ENCODE measurements at regions of chr2 and their contacts with region 1.

Region 1: GRCh38 chr2:70226781-70227180 is 21.6 kb downstream of the TIA1 start:
- DNase-seq: no peak

Region 2: DNA sequence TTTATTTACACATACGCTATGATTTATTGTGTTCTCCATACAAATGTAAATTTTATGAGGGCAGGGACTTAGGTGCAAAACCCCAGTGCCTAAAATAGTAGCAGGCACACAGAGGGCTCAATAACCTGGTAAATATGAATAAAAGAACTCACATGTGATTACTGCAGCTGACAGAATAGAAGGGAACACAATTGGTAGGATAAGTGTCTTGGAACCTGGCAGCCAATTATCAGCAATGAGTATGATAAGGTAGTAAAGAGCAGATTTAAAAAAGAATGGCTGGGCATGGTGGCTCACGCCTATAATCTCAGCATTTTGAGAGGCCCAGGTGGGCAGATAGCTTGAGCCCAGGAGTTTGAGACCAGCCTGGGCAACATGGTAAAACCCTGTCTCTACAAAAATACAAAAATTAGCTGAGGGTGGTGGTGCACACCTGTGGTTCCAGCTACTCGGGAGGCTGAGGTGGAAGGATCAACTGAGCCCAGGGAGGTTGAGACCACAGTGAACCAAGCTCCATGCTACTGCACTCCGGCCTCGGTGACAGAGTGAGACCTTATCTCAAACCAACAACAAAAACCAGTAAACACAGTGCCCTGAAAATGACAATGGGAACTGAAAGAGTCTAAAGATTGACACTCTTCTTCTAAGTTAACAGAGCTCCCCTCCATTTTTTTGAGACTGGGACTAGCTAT is 56.9 kb after region 1 on chr2:
- intact Hi-C with region 1: loop called in 1 of 2 experiments (anchors 5 kb)
- DNase-seq: no peak

Measured in posterior vena cava (tissue), 2 donors.